ENCODE measurements at regions of chr4 and their contacts with region 1.

Region 1: GRCh38 chr4:4334798-4335520 is 44.9 kb downstream of the ZBTB49 start:
- DNase-seq: peak; percentile 83
- ATAC-seq: peak; percentile 94
- H3K4me3 Mint-ChIP-seq: no peak overlapping the region
- H3K27ac Mint-ChIP-seq: no peak overlapping the region
- H3K4me1 Mint-ChIP-seq: peaks cover 3% of the 10 kb centered on the region
- H3K27me3 Mint-ChIP-seq: no peaks in the 10 kb centered on the region

Region 2: GRCh38 chr4:4260253-4260652 is 74.7 kb before region 1 on chr4:
- CTCF ChIA-PET with region 1: interaction called, 58 read pairs
- DNase-seq: no peak
- ATAC-seq: peak; percentile 99
- H3K4me3 Mint-ChIP-seq: no peak overlapping the region
- H3K27ac Mint-ChIP-seq: no peak overlapping the region
- H3K4me1 Mint-ChIP-seq: peaks cover 5% of the 10 kb centered on the region
- H3K27me3 Mint-ChIP-seq: no peaks in the 10 kb centered on the region

Measured in activated CD8-positive, alpha-beta memory T cell treated with anti-CD3 and anti-CD28 coated beads, Interleukin-2, amount 10 ng/mL, durations not matched to agents 7 days and 5 days (primary cell).